ENCODE measurements at regions of chr1 and their contacts with region 1.

Region 1: DNA sequence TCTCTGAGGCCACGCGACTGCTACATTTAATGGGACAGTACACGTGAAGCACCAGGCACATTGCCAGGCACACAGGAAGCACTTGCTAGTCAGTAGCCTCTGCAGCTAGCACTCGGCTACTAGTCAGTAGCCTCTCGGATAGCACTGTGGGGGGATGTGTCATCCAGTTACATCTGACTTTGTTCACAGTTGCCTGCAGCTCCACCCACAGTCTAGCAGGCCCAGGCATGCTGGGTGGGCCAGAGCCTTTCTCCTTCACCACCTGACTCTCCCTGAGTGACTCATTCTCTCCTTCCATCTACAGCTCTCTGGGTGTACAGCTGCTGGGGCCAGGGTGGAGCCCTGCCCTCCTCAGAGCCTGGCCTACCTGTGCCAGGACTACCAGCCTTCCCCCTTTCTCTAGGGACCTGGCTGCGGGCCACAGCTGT is 51.5 kb downstream of the PTPRF start:
- DNase-seq: peak; percentile 99
- H3K4me3 ChIP-seq: no peak overlapping the region
- H3K27ac ChIP-seq: peak overlapping the region; percentile 66
- H3K4me1 ChIP-seq: peaks cover 52% of the 10 kb centered on the region
- H3K27me3 ChIP-seq: no peaks in the 10 kb centered on the region
- CTCF ChIP-seq: no peak

Region 2: GRCh38 chr1:43509723-43510375 is 72.3 kb before region 1 on chr1:
- CTCF ChIA-PET with region 1: no interaction called
- dilution Hi-C with region 1: loop called (anchors 5 kb)
- in situ Hi-C with region 1: no loop called
- intact Hi-C with region 1: no loop called
- DNase-seq: peak; percentile 45
- H3K4me3 ChIP-seq: no peak overlapping the region
- H3K27ac ChIP-seq: peak overlapping the region; percentile 22
- H3K4me1 ChIP-seq: peaks cover 23% of the 10 kb centered on the region
- H3K27me3 ChIP-seq: no peaks in the 10 kb centered on the region
- CTCF ChIP-seq: no peak

Region 3: GRCh38 chr1:43549921-43550597 is 32.1 kb before region 1 on chr1:
- CTCF ChIA-PET with region 1: no interaction called
- dilution Hi-C with region 1: no loop called
- in situ Hi-C with region 1: no loop called
- intact Hi-C with region 1: loop called (anchors 1 kb)
- DNase-seq: peak; percentile 96
- H3K4me3 ChIP-seq: peak overlapping the region; percentile 44 to 55 (median 44)
- H3K27ac ChIP-seq: peak overlapping the region; percentile 92
- H3K4me1 ChIP-seq: peaks cover 53% of the 10 kb centered on the region
- H3K27me3 ChIP-seq: no peaks in the 10 kb centered on the region
- CTCF ChIP-seq: no peak

Region 4: GRCh38 chr1:43611950-43612349 is 29.8 kb after region 1 on chr1:
- CTCF ChIA-PET with region 1: interaction called, 18 read pairs
- dilution Hi-C with region 1: no loop called
- in situ Hi-C with region 1: no loop called
- intact Hi-C with region 1: loop called (anchors 2 kb)
- DNase-seq: no peak
- H3K4me3 ChIP-seq: no peak overlapping the region
- H3K27ac ChIP-seq: no peak overlapping the region
- H3K4me1 ChIP-seq: no peaks in the 10 kb centered on the region
- H3K27me3 ChIP-seq: no peaks in the 10 kb centered on the region
- CTCF ChIP-seq: no peak

Region 5: DNA sequence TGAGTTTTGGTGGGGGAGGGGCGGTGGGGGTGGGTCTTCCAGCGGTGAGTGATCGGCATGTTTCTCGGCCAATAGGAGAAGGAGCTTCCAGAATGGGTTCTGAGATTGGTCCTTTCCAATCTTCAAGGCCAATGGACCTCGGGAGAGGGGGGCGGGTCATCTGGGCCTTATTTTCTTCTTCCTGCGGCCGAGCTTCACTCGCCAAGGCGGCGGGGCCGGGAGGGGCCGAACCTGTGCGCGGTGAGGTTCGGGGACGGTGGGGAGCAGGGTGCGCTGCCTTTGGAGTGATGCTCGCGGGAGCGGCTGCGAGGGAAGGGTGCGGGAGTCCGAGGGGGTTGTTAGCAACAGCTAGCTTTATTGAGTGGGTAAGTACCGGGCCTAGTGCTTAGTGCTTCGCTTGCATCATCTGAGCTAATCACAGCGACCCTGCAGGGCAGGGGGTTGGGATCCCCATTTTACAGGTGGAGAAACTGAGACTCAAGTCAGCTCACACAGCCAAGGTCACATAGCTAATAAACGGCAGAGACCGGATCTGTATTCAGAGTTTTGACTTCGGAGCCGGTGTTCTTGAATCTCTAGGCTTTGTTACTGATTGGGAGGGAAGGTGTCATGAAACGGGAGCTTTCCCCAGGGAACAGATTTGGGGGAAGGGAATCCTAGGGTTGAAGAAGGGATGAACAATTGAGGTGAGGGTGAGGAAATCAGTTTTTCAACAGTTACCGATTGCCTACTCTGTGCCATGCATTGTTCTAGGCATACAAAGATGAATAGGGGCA is 68.3 kb after region 1 on chr1:
- CTCF ChIA-PET with region 1: no interaction called
- dilution Hi-C with region 1: no loop called
- in situ Hi-C with region 1: no loop called
- intact Hi-C with region 1: loop called (anchors 1 kb)
- DNase-seq: peak; percentile 95
- H3K4me3 ChIP-seq: peak overlapping the region; percentile 69 to 81 (median 75)
- H3K27ac ChIP-seq: peak overlapping the region; percentile 92
- H3K4me1 ChIP-seq: peaks cover 20% of the 10 kb centered on the region
- H3K27me3 ChIP-seq: no peaks in the 10 kb centered on the region
- CTCF ChIP-seq: no peak

Region 6: GRCh38 chr1:43757343-43758053 is 175.3 kb after region 1 on chr1:
- CTCF ChIA-PET with region 1: no interaction called
- dilution Hi-C with region 1: no loop called
- in situ Hi-C with region 1: no loop called
- intact Hi-C with region 1: no loop called
- DNase-seq: no peak
- H3K4me3 ChIP-seq: no peak overlapping the region
- H3K27ac ChIP-seq: no peak overlapping the region
- H3K4me1 ChIP-seq: no peaks in the 10 kb centered on the region
- H3K27me3 ChIP-seq: no peaks in the 10 kb centered on the region
- CTCF ChIP-seq: no peak

Region 7: DNA sequence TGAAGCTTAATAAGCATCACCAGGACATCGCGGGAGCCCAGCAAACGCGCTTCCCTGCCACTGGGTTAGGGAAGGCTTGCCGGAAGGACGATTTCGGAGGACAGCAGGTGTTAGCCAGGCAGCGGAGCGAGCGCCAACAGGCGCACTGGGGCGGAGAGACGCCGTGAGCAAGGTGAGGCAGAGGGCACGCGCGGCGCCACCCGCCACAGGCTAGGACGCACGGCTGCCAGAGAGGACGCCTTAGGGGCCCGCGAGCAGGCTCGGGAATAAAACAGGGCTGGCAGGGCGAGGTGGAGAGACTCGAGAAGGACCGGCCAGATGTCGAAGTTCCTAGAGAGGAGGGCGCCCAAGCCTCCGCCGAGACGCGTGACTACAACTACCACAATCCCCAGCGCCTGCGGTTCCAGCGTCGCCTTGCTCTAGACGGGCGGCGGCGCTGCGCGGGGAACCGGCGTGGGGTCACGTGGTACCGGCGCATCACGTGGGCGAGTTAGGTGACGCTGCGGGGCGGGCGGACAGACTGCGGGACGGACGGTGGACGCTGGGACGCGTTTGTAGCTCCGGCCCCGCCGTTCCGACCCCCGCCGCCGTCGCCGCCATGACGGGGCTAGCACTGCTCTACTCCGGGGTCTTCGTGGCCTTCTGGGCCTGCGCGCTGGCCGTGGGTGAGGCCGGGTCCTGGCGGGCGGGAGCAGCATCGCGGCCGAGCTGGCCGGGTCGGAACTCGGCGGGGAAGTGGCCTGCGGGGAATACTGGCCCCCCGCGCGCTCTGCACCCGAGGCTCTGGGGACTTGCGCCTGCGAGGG is 392.5 kb after region 1 on chr1 and contains the start of gene ATP6V0B:
- CTCF ChIA-PET with region 1: no interaction called
- dilution Hi-C with region 1: loop called (anchors 10 kb)
- in situ Hi-C with region 1: no loop called
- intact Hi-C with region 1: no loop called
- DNase-seq: peak; percentile 93
- H3K4me3 ChIP-seq: peak within 1 kb of the TSS; percentile 86 to 94 (median 89)
- H3K27ac ChIP-seq: peak within 1 kb of the TSS; percentile 64
- H3K4me1 ChIP-seq: peaks cover 39% of the 10 kb centered on the region
- H3K27me3 ChIP-seq: no peaks in the 10 kb centered on the region
- CTCF ChIP-seq: no peak
- total RNA-seq, gene ATP6V0B: 84.4 to 127 TPM